MCF 10A (cell line): ENCODE measurements at regions of chr5 and their contacts with region 1.

Region 1: DNA sequence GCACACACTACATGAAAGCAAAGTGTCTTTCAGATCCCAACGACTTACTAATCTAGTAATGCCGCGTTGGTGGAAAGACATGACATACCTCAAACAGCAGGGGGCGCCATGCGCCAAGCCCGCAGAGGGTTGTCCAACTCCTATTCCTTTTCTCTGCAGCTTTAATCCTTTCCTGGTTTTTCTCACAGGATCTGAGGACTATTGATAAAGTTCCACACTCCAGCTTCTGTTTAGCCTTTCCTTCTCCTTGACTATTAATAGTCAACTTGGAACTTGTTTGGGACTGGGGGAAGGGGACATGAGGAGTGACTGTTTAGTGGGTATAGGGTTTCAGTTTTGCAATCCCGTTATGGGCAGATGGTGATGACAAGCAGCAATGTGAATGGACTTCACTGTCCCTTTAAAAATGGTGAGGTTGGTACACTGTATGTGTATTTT is 62.9 kb downstream of the OTULIN start:
- DNase-seq: peak; percentile 82
- H3K4me3 Mint-ChIP-seq: no peak overlapping the region
- H3K27ac Mint-ChIP-seq: no peak overlapping the region
- H3K4me1 Mint-ChIP-seq: peaks cover 10% of the 10 kb centered on the region
- H3K27me3 Mint-ChIP-seq: no peaks in the 10 kb centered on the region
- CTCF ChIP-seq: peak; percentile 92

Region 2: DNA sequence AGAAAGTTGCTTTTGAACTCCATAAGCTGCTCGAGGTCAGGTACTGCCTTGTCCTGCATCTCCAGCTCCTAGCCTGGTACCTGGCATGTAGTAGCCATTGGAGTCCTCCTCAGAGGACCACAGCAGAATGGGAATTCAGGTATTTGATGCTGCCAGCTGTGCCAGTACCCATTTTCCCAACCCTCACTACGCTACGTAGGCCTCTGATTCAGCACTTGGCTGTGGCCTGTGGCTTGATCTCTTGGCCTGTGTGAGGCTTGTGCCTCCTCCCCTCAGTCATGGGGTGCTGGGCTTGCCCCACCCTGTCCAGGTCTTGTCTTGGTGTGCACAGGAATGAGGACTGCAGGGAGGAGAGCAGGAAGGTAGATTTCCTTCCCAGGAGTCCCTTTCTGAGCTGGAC is 51.1 kb before region 1 on chr5:
- CTCF ChIA-PET with region 1: interaction called, 12 read pairs
- POLR2A ChIA-PET with region 1: no interaction called
- intact Hi-C with region 1: no loop called
- DNase-seq: peak; percentile 76
- H3K4me3 Mint-ChIP-seq: peak overlapping the region; percentile 26
- H3K27ac Mint-ChIP-seq: peak overlapping the region; percentile 86
- H3K4me1 Mint-ChIP-seq: peaks cover 51% of the 10 kb centered on the region
- H3K27me3 Mint-ChIP-seq: no peaks in the 10 kb centered on the region
- CTCF ChIP-seq: no peak

Region 3: DNA sequence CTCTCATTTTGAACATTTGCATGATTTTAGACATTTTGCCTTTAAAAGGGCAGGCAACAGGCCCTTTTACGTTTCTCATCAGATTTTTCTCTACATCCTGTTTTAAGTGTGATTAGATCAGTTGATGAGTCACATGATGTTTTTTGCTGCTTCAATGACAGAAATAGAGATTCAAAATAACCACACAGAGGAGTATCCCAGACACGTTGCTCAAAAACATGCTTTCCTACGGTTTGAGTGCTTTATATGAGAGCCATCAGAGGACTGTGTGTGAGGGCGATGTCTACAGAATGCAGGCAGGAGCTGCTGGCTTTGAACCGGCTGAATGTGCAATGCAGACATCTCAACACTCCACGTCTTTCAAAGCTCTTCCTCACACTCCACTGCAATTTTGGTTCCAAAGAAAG is 20.8 kb before region 1 on chr5:
- CTCF ChIA-PET with region 1: interaction called, 26 read pairs
- POLR2A ChIA-PET with region 1: interaction called, 4 read pairs
- intact Hi-C with region 1: no loop called
- DNase-seq: no peak
- H3K4me3 Mint-ChIP-seq: no peak overlapping the region
- H3K27ac Mint-ChIP-seq: peak overlapping the region; percentile 52
- H3K4me1 Mint-ChIP-seq: peaks cover 20% of the 10 kb centered on the region
- H3K27me3 Mint-ChIP-seq: no peaks in the 10 kb centered on the region
- CTCF ChIP-seq: no peak

Region 4: GRCh38 chr5:14743601-14744295 is 16.3 kb after region 1 on chr5:
- CTCF ChIA-PET with region 1: interaction called, 14 read pairs
- POLR2A ChIA-PET with region 1: no interaction called
- intact Hi-C with region 1: no loop called
- DNase-seq: peak; percentile 34
- H3K4me3 Mint-ChIP-seq: no peak overlapping the region
- H3K27ac Mint-ChIP-seq: peak overlapping the region; percentile 35
- H3K4me1 Mint-ChIP-seq: peaks cover 19% of the 10 kb centered on the region
- H3K27me3 Mint-ChIP-seq: no peaks in the 10 kb centered on the region
- CTCF ChIP-seq: no peak

Region 5: DNA sequence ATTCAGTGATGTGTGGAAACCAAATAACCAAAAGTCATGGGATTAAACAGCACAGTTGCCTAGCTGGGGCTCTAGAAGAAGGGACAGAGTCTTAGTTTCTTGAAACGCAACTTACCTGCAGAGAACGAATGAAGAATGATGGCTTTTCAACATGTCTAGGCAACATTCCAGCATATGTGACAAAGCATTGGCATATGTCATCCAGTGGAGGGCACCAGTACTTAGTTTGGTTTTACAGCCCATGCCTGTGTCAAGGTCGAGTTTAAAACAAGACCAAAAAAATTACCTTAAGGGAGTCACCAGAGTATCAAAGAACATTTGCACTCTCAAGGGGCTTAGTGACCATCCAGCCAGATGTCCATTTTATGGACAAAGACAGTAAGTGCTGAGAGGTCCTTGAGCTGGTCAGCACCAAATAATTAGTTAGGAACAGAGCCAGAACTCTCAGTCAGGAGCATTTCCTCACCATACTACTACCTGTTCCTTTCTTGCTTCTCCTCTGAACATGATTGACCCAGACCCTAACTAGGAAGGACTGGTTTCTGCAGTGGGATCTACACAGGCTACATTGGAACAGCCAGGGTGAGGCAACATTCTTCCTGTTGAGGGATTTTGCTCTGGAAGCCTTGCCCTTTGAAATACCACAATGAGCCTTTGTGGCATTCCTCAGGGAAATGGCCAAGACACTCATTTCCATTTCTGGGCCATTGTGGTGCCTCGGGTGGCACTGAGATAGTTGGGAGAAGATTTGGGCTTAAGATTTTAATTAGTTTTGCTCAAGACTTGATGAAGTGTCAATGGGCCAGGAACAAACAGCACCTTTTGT is 219.6 kb after region 1 on chr5:
- CTCF ChIA-PET with region 1: interaction called, 4 read pairs
- POLR2A ChIA-PET with region 1: no interaction called
- intact Hi-C with region 1: loop called (anchors 5 kb)
- DNase-seq: peak; percentile 66
- H3K4me3 Mint-ChIP-seq: no peak overlapping the region
- H3K27ac Mint-ChIP-seq: no peak overlapping the region
- H3K4me1 Mint-ChIP-seq: peaks cover 6% of the 10 kb centered on the region
- H3K27me3 Mint-ChIP-seq: no peaks in the 10 kb centered on the region
- CTCF ChIP-seq: peak; percentile 27

Region 6: DNA sequence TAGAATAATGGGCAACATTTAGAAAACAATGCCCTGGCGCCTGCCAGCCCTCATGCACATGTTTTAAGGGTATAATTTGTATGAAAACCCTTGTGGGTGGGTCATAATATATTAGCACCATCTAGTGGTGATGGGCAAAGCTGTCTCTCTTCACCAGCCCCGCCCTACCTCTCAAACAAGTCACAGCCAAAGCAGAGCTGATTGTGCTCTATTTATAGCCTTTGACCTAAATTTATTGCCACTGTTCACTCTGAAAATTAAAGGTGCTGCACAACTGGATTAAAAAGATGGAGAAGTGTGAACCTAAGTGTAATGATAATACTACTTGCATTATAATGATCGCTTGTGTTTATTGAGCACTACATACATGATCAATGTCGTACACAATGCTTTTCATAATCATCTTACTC is 276.1 kb after region 1 on chr5:
- CTCF ChIA-PET with region 1: interaction called, 223 read pairs
- POLR2A ChIA-PET with region 1: interaction called, 17 read pairs
- intact Hi-C with region 1: loop called (anchors 1 kb)
- DNase-seq: peak; percentile 77
- H3K4me3 Mint-ChIP-seq: no peak overlapping the region
- H3K27ac Mint-ChIP-seq: no peak overlapping the region
- H3K4me1 Mint-ChIP-seq: peaks cover 12% of the 10 kb centered on the region
- H3K27me3 Mint-ChIP-seq: peaks cover 19% of the 10 kb centered on the region
- CTCF ChIP-seq: peak; percentile 81